ENCODE measurements at regions of chr3 and their contacts with region 1.

Region 1: DNA sequence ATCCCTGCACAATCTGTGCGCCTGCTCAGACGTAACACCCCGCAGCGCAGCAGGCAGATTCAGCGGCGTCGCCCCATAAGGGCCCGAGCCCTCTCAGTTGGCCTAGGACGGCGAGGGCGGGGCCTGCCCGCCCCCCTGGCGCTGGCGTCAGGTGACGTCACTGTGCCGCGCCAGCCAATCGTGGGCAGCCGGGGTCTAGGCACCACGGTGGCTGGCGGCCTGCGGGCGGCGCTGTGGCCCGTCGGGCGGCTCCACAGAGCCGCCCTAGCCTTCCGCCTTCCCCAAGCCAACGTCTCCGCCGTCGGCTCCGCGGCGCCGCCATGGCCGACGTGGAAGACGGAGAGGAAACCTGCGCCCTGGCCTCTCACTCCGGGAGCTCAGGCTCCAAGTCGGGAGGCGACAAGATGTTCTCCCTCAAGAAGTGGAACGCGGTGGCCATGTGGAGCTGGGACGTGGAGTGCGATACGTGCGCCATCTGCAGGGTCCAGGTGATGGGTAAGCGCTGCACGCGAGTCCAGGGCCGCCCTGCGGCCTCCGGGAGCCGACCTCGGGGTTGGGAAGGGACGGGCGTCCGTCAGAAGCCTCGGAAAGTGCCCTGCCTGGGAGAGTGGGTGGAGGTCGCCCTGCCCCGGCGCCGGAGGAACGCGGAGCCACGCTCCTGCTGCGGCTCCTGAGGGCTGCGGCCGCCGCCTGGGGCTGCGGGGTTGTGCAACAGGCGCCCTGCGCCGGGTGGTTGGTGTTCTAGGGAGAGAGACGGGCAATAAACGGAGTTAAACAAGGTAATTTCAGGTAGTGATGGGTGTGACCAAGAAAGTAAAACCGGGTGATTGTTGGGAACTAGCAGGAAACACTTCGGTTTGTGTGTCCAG is at the start of gene RNF7:
- DNase-seq: peak; percentile 91 to 98 (median 97)
- ATAC-seq: peak; percentile 89 to 91
- H3K4me3 Mint-ChIP-seq: peak within 1 kb of the TSS; percentile 96 to 100 (median 98)
- H3K27ac Mint-ChIP-seq: peak within 1 kb of the TSS; percentile 97 to 100 (median 99)
- H3K4me1 Mint-ChIP-seq: peaks cover 8 to 45% (median 39%) of the 10 kb centered on the region in 4 donors
- H3K27me3 Mint-ChIP-seq: no peaks in the 10 kb centered on the region
- polyA plus RNA-seq, gene RNF7: 114 to 116 (median 115) TPM

Region 2: DNA sequence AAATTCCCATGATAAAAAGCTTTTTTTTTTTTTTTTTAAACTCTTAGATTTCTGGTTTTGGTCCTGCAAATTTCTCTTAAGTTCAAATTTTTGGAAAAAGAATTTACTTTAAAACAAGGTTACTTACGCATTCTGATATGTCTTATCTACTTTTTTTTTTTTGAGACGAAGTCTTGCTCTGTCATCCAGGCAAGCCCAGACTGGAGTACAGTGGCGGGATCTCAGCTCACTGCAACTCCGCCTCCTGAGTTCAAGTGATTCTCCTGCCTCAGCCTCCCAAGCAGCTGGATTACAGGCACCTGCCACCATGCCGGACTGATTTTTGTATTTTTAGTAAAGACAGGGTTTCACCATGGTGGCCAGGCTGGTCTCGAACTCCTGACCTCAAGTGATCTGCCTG is 168.2 kb before region 1 on chr3:
- POLR2A ChIA-PET with region 1: no interaction called
- DNase-seq: no peak
- ATAC-seq: no peak
- H3K4me3 Mint-ChIP-seq: no peak overlapping the region
- H3K27ac Mint-ChIP-seq: peak overlapping the region in 5 of 10 donors; percentile 41 to 62 (median 49)
- H3K4me1 Mint-ChIP-seq: peaks cover 7 to 23% (median 12%) of the 10 kb centered on the region in 4 donors
- H3K27me3 Mint-ChIP-seq: no peaks in the 10 kb centered on the region

Region 3: GRCh38 chr3:141796081-141796888 is 58.0 kb after region 1 on chr3:
- POLR2A ChIA-PET with region 1: interaction called, 44 read pairs
- DNase-seq: peak; percentile 17 to 80 (median 54)
- ATAC-seq: peak; percentile 76 to 83
- H3K4me3 Mint-ChIP-seq: peak overlapping the region; percentile 84 to 94 (median 90)
- H3K27ac Mint-ChIP-seq: peak overlapping the region; percentile 94 to 99 (median 97)
- H3K4me1 Mint-ChIP-seq: peaks cover 38 to 64% (median 58%) of the 10 kb centered on the region in 4 donors
- H3K27me3 Mint-ChIP-seq: no peaks in the 10 kb centered on the region

Region 4: GRCh38 chr3:141845407-141846049 is 107.3 kb after region 1 on chr3:
- POLR2A ChIA-PET with region 1: interaction called, 10 read pairs
- DNase-seq: peak; percentile 15 to 80 (median 40)
- ATAC-seq: peak; percentile 77 to 96
- H3K4me3 Mint-ChIP-seq: no peak overlapping the region
- H3K27ac Mint-ChIP-seq: peak overlapping the region in 2 of 10 donors; percentile 19 to 22
- H3K4me1 Mint-ChIP-seq: peaks cover 7 to 16% (median 10%) of the 10 kb centered on the region in 4 donors
- H3K27me3 Mint-ChIP-seq: peaks cover 0 to 5% (median 0%) of the 10 kb centered on the region in 5 donors

Region 5: DNA sequence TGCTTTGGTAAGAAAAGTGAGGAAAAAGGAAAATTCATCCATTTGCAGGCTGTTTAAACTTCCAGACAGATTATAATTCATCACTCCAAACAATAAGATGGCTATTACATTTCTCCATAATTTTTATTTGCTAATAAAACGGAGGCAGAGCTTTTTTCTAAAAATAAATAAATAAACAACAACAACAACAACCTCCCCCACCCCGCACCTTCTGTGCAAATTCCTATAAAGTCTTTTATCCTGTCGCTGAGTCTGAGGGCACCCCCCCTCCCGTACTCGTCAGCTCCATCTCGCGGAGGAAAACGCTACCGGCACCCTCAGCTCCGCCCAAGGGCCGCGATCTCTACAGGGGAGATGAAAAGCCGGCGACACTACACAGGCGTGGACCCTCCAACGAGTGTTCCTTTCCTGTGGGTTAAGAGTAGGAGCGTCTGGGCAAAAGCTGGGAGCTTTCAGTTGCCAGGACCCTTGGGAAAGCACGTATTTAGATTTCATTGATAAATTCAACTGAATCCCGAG is 137.2 kb after region 1 on chr3:
- POLR2A ChIA-PET with region 1: interaction called, 39 read pairs
- DNase-seq: peak; percentile 66 to 89 (median 78)
- ATAC-seq: peak; percentile 59 to 69
- H3K4me3 Mint-ChIP-seq: peak overlapping the region; percentile 84 to 96 (median 90)
- H3K27ac Mint-ChIP-seq: peak overlapping the region; percentile 86 to 98 (median 94)
- H3K4me1 Mint-ChIP-seq: peaks cover 9 to 37% (median 29%) of the 10 kb centered on the region in 4 donors
- H3K27me3 Mint-ChIP-seq: no peaks in the 10 kb centered on the region

Region 6: DNA sequence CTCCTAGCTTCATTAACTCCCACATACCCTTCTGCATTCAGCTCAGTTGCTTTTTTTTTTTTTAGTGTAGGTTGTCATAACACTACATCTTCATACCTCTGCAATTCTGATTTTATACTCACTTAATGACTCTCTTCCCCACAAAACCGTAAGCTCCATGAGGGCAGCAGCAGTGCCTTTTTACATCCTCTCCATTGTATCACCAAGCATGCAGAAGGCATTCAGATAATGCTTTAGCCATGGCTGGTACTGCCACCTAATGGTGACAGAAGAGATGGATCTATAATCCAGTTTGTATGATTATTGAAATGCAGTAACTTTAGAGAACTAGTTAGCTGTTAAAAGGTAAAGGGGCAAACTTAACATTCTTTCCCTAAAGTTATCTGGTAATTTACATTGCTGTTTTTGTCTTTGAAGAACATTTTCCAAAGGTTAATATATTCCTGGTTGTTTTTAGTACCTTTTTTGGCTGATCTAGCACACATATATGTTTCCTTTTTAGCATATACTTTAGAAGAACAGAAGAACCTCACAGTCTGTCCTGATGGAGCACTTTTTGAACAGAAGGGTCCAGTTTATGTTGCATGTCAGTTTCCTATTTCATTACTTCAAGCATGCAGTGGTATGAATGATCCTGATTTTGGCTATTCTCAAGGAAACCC is 175.0 kb after region 1 on chr3:
- POLR2A ChIA-PET with region 1: interaction called, 11 read pairs
- DNase-seq: peak in 9 of 10 donors; percentile 25 to 74 (median 54)
- ATAC-seq: peak; percentile 89
- H3K4me3 Mint-ChIP-seq: no peak overlapping the region
- H3K27ac Mint-ChIP-seq: peak overlapping the region in 6 of 10 donors; percentile 0 to 63 (median 17)
- H3K4me1 Mint-ChIP-seq: peaks cover 0 to 6% (median 2%) of the 10 kb centered on the region in 4 donors
- H3K27me3 Mint-ChIP-seq: no peaks in the 10 kb centered on the region

Measured in naive thymus-derived CD8-positive, alpha-beta T cell (primary cell).